Activated CD4-positive, alpha-beta T cell treated with anti-CD3 and anti-CD28 coated beads, Interleukin-2, amount 10 ng/mL, durations not matched to agents 24 days and 14 days (primary cell): ENCODE measurements at regions of chr3 and their contacts with region 1.

Region 1: GRCh38 chr3:152382312-152383135 is 113.8 kb downstream of the MBNL1 start:
- DNase-seq: no peak
- H3K4me3 Mint-ChIP-seq: peak overlapping the region; percentile 78
- H3K27ac Mint-ChIP-seq: peak overlapping the region; percentile 87
- H3K4me1 Mint-ChIP-seq: peaks cover 33% of the 10 kb centered on the region
- H3K27me3 Mint-ChIP-seq: no peaks in the 10 kb centered on the region

Region 2: GRCh38 chr3:152356870-152357276 is 25.7 kb before region 1 on chr3:
- intact Hi-C with region 1: loop called (anchors 2 kb)
- DNase-seq: no peak
- H3K4me3 Mint-ChIP-seq: no peak overlapping the region
- H3K27ac Mint-ChIP-seq: peak overlapping the region; percentile 51
- H3K4me1 Mint-ChIP-seq: peaks cover 49% of the 10 kb centered on the region
- H3K27me3 Mint-ChIP-seq: no peaks in the 10 kb centered on the region

Region 3: GRCh38 chr3:152402695-152403451 is 20.3 kb after region 1 on chr3:
- intact Hi-C with region 1: loop called (anchors 2 kb)
- DNase-seq: no peak
- H3K4me3 Mint-ChIP-seq: peak overlapping the region; percentile 29
- H3K27ac Mint-ChIP-seq: peak overlapping the region; percentile 89
- H3K4me1 Mint-ChIP-seq: peaks cover 57% of the 10 kb centered on the region
- H3K27me3 Mint-ChIP-seq: no peaks in the 10 kb centered on the region

Region 4: DNA sequence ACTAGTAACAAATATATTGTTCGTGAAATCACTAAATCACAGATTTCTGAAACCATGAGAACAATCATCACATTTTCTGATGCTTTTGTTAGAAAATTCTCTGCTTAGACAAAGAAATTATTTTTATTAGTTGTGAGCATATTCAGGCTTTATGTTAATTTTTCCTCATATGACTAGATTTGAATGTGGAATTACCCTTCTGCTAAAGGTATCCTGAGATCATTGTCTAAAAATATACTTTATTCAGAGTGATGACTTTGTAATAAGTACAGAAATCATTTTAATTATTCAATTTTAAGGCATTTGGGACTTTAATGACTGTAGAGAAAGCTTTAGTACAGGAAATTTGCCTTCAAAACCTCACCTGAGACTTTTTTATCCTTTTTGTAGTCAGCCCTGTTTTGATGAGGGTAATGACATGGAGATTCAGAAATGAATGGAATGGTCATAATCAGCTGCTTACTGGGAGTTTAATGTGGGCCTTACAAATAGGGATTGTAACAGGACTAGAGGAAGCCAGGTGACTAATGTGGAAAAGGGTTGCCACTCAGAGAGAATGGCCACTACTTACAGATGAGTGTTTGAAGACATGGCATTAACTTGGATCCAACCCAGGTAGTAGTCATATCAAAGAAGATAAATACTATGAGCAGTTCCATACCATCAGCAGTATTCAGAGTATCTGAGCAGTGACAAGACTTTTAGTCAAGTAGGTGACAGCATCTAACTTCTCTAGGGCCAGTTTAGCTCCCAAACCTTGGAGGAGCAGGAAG is 34.5 kb after region 1 on chr3:
- intact Hi-C with region 1: loop called (anchors 5 kb)
- DNase-seq: no peak
- H3K4me3 Mint-ChIP-seq: no peak overlapping the region
- H3K27ac Mint-ChIP-seq: peak overlapping the region; percentile 45
- H3K4me1 Mint-ChIP-seq: peaks cover 41% of the 10 kb centered on the region
- H3K27me3 Mint-ChIP-seq: no peaks in the 10 kb centered on the region

Region 5: GRCh38 chr3:152671446-152672319 is 289.2 kb after region 1 on chr3:
- intact Hi-C with region 1: no loop called
- DNase-seq: no peak
- H3K4me3 Mint-ChIP-seq: no peak overlapping the region
- H3K27ac Mint-ChIP-seq: no peak overlapping the region
- H3K4me1 Mint-ChIP-seq: no peaks in the 10 kb centered on the region
- H3K27me3 Mint-ChIP-seq: peaks cover 9% of the 10 kb centered on the region